ENCODE measurements at regions of chr17 and their contacts with region 1.

Region 1: GRCh38 chr17:56977673-56978395 is at the start of gene SCPEP1:
- DNase-seq: peak; percentile 82 to 92 (median 90)
- H3K4me3 ChIP-seq: peak within 1 kb of the TSS; percentile 55 to 94 (median 76)
- H3K27ac ChIP-seq: peak within 1 kb of the TSS in 52 of 59 donors; percentile 16 to 82 (median 70)
- H3K27me3 ChIP-seq: no peaks in the 10 kb centered on the region
- CTCF ChIP-seq: peak in 28 of 56 donors; percentile 2 to 52 (median 30)
- total RNA-seq, gene SCPEP1: 26.5 to 108 (median 65.4) TPM

Region 2: DNA sequence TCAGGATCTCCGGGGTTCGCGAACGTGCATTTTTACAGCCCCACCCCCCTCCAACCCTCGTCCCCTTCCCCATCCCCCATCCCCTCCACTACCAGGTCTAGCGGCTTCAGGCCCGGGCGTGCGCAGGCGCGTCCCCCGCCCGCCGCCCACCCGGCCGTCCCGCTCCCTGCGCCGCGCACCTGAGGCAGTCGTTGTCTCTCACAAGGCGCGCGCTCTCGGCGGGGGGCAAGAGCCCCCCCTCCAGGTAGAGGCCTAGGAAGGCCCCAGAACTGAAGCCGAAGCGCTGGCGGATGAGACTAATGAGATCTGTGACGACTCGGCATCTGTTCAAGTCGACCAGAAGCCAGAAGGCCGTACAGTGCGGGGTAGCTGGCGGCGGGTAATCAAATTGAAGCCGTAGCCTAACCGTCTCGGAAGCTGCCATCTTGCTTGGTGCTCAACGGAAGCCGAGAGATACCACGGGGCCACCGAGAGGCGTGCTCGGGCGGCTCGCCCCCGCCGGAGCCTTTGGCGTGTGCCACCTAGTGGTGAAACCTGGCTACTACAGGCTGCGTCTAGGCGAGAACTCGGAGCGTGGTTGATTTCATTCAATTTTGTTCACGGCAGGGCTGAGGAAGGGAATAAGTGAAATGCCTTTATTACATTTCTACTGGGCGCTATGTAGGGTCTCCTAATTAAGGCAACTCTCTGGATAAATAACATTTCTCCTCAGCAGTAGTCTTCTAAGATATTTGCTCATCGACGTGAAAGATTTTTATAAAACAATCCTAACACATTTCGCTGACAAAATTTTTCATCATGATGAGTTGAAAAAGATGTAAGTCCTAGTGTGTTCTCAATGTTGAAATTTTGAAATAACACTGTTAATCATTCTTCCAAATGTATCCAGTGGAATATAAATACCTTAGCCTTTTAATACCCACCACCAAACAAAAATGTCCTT is 17.0 kb before region 1 on chr17 and contains the start of gene COIL:
- intact Hi-C with region 1: loop called in 1 of 2 experiments (anchors 2 kb)
- DNase-seq: peak; percentile 88 to 96 (median 94)
- H3K4me3 ChIP-seq: peak within 1 kb of the TSS; percentile 49 to 91 (median 76)
- H3K27ac ChIP-seq: peak within 1 kb of the TSS in 57 of 59 donors; percentile 21 to 97 (median 84)
- H3K27me3 ChIP-seq: no peaks in the 10 kb centered on the region
- CTCF ChIP-seq: peak; percentile 96 to 100 (median 99)
- total RNA-seq, gene COIL: 7.0 to 17.4 (median 13.3) TPM

Region 3: DNA sequence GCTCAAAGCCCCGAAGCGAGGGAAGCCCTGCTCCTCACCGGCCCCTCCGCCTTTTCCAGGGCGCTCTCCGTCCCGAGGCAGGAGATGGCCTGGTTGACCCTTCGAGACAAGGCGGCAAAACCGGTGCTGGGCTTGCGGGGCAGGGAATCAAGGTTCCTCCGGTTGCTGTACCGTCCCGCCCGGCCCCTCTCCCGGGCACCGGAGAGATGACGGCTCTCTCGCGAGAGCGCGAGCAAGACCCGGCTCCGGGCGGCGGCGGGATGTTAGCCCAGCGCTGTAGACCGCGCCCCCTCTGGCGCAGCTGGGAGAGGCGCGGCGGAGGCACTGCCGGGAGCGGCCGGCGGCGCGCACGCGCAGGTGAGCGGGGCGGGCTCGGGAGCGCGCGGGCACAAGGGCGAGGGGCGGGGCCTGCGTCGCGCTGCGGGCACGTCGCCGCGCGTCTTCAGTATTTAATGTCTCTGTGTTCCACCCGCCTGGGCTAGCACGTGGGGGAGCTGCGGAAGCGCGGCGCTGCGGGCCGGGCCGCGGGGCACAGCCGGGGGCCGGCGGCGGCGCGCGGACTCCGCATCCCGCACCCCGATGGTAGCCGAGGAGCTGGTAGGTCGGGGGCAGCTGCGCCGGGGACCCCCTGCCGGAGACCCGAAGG is 107.1 kb after region 1 on chr17 and contains the start of gene AKAP1:
- intact Hi-C with region 1: loop called (anchors 5 to 10 kb)
- DNase-seq: peak; percentile 81 to 97 (median 91)
- H3K4me3 ChIP-seq: peak within 1 kb of the TSS; percentile 62 to 99 (median 90)
- H3K27ac ChIP-seq: peak within 1 kb of the TSS; percentile 72 to 99 (median 95)
- H3K27me3 ChIP-seq: no peaks in the 10 kb centered on the region
- CTCF ChIP-seq: peak in 47 of 56 donors; percentile 8 to 70 (median 47)
- total RNA-seq, gene AKAP1: 37.5 to 77.9 (median 57.2) TPM

Region 4: GRCh38 chr17:57255776-57256681 is 278.2 kb after region 1 on chr17 and contains the start of gene MSI2:
- intact Hi-C with region 1: no loop called
- DNase-seq: peak; percentile 87 to 94 (median 92)
- H3K4me3 ChIP-seq: peak within 1 kb of the TSS; percentile 49 to 95 (median 86)
- H3K27ac ChIP-seq: peak within 1 kb of the TSS; percentile 52 to 99 (median 97)
- H3K27me3 ChIP-seq: no peaks in the 10 kb centered on the region
- CTCF ChIP-seq: peak in 5 of 56 donors; percentile 9 to 38 (median 16)
- total RNA-seq, gene MSI2: 86.3 to 279 (median 141) TPM